Activated CD8-positive, alpha-beta memory T cell treated with anti-CD3 and anti-CD28 coated beads, Interleukin-2, amount 10 ng/mL, durations not matched to agents 7 days and 5 days (primary cell): ENCODE measurements at regions of chr9 and their contacts with region 1.

Region 1: DNA sequence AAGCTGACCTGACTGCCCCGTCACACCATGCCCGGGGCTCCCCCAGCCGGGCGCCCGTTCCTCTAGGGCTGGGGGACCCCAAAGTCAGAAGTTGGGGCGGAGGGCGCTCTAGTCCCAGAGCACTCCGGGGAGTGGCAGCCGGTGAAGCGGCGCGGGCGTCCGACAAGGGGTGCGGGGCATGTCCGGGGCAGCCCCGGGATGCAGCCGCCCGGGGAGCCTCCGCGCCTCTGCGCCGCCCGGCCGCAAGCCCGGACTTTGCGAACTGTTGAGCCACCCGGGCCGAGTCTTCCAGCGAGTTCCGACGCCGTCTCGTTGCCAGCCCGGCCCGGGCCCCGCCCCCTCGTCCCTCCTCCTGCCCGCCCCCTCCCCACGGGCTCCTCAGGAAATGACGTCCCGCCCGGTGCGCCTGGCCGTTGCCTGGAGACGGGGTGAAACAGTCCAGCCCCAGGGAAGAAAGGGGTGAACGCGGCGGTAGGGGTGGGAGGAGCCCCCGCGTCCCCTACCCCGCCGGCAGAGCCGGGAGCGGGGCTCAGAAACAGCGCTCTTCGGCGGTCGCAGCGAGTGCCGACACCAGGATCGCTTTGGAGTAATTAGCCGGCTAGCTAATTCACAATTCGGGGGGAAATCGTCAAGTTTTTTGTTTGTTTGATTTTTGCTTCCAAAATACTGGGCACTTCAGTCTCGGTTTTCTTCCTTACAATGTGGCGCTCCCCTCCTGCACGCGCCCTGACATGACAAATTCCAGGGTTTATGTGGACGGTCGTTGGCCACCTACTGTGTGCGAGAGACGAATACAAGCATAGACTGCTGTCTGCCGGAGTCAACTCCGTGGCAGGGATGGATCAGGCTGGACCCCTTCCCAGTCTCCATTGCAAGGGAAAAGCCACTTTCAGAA is at the start of gene WHRN:
- DNase-seq: peak; percentile 91
- ATAC-seq: peak; percentile 84
- H3K4me3 Mint-ChIP-seq: peak within 1 kb of the TSS; percentile 74
- H3K27ac Mint-ChIP-seq: peak within 1 kb of the TSS; percentile 63
- H3K4me1 Mint-ChIP-seq: peaks cover 30% of the 10 kb centered on the region
- H3K27me3 Mint-ChIP-seq: peaks cover 60% of the 10 kb centered on the region
- total RNA-seq, gene WHRN: 6.5 to 12.4 TPM

Region 2: GRCh38 chr9:114434878-114435311 is 70.5 kb before region 1 on chr9:
- CTCF ChIA-PET with region 1: interaction called, 22 read pairs
- DNase-seq: no peak
- ATAC-seq: peak; percentile 41
- H3K4me3 Mint-ChIP-seq: no peak overlapping the region
- H3K27ac Mint-ChIP-seq: no peak overlapping the region
- H3K4me1 Mint-ChIP-seq: peaks cover 5% of the 10 kb centered on the region
- H3K27me3 Mint-ChIP-seq: no peaks in the 10 kb centered on the region

Region 3: GRCh38 chr9:114487607-114488300 is 17.7 kb before region 1 on chr9:
- CTCF ChIA-PET with region 1: interaction called, 95 read pairs
- DNase-seq: peak; percentile 73
- ATAC-seq: peak; percentile 60
- H3K4me3 Mint-ChIP-seq: no peak overlapping the region
- H3K27ac Mint-ChIP-seq: no peak overlapping the region
- H3K4me1 Mint-ChIP-seq: peaks cover 27% of the 10 kb centered on the region
- H3K27me3 Mint-ChIP-seq: no peaks in the 10 kb centered on the region

Region 4: GRCh38 chr9:114518599-114519022 is 13.2 kb after region 1 on chr9:
- CTCF ChIA-PET with region 1: interaction called, 12 read pairs
- DNase-seq: no peak
- ATAC-seq: peak; percentile 70
- H3K4me3 Mint-ChIP-seq: no peak overlapping the region
- H3K27ac Mint-ChIP-seq: peak overlapping the region; percentile 64
- H3K4me1 Mint-ChIP-seq: peaks cover 12% of the 10 kb centered on the region
- H3K27me3 Mint-ChIP-seq: peaks cover 28% of the 10 kb centered on the region